Naive thymus-derived CD4-positive, alpha-beta T cell (primary cell): ENCODE measurements at regions of chr9 and their contacts with region 1.

Region 1: DNA sequence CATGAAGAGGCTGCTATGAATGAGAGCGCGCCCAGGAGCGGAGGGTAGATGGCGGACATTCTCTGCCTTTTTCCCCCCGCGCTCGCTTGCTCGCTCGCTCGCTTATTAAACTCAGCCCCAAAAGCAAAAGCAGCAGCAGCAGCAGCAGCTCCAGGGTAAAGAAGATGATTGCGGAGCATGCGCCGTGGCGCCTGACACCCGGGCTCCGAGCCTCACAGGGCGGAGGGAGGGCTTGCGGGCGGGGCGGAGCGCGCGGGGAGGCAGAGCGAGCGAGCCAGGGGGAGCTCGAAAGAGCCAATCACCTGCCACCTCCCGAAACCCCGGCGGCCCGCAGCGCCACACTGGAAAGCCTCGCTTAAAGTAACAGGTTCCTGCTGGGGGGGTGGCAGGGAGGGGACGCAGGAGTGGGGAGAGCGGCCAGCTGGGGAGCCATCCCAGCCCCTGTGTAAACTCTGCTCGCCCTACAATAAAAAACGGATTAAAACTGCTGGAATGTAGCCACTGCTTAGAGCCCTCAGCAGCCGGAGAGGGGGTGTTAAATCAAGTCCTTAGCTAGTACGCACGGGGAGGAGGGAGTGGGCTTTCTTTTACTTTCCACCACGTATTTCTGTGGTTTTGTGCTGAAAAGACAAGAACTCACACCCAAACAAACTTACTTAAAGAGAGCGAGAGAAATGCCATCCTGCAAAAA is at the start of gene MLLT3:
- DNase-seq: peak; percentile 91 to 98 (median 98)
- ATAC-seq: peak; percentile 88
- H3K4me3 ChIP-seq: peak within 1 kb of the TSS; percentile 84
- H3K4me3 Mint-ChIP-seq: peak within 1 kb of the TSS; percentile 92 to 100 (median 98)
- H3K27ac ChIP-seq: peak within 1 kb of the TSS; percentile 89
- H3K27ac Mint-ChIP-seq: peak within 1 kb of the TSS; percentile 89 to 100 (median 99)
- H3K4me1 ChIP-seq: peaks cover 21 to 40% of the 10 kb centered on the region in 2 donors
- H3K4me1 Mint-ChIP-seq: peaks cover 30 to 48% (median 45%) of the 10 kb centered on the region in 7 donors
- H3K27me3 ChIP-seq: no peaks in the 10 kb centered on the region
- H3K27me3 Mint-ChIP-seq: no peaks in the 10 kb centered on the region
- total RNA-seq, gene MLLT3: 40.9 to 85.3 (median 71.3) TPM

Region 2: DNA sequence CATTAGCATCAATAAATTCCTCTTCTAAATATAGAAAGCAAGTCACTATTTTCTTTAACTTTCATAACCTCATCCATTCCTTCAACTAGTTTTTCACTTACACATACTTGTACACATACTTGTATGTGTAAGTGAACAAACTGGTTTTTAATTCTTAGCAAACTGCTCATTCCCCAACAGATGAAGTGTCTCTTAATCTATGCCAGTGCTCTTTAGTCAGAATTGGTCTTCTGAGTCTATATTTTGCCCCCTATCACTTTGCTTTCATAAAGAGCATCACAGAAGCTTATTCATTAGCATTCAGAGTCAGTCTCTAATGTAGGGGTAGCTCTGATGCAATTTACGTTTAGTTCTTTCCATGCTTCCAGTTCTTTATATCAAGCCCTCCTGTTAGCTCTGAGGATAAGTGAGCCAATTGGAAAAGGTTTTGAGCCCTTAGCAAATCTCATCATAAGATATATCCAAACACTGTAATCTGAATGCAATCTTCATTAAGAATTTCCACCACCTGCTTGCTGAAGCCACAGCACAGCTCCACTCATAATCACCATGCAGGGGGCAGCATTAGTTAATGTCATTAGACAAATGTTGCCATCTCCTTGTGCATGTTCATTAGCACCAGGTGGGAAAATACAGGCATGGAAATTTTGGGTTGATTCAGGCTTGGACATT is 655.1 kb before region 1 on chr9:
- CTCF ChIA-PET with region 1: no interaction called
- POLR2A ChIA-PET with region 1: no interaction called
- intact Hi-C with region 1: loop called in 1 of 2 experiments (anchors 5 kb)
- DNase-seq: peak in 2 of 9 donors; percentile 5 to 9
- ATAC-seq: no peak
- H3K4me3 ChIP-seq: no peak overlapping the region
- H3K4me3 Mint-ChIP-seq: no peak overlapping the region
- H3K27ac ChIP-seq: no peak overlapping the region
- H3K27ac Mint-ChIP-seq: no peak overlapping the region
- H3K4me1 ChIP-seq: no peaks in the 10 kb centered on the region
- H3K4me1 Mint-ChIP-seq: peaks cover 0 to 14% (median 6%) of the 10 kb centered on the region in 7 donors
- H3K27me3 ChIP-seq: no peaks in the 10 kb centered on the region
- H3K27me3 Mint-ChIP-seq: no peaks in the 10 kb centered on the region

Region 3: GRCh38 chr9:20242510-20243189 is 379.8 kb before region 1 on chr9:
- CTCF ChIA-PET with region 1: no interaction called
- POLR2A ChIA-PET with region 1: interaction called, 4 read pairs
- intact Hi-C with region 1: loop called (anchors 2 to 5 kb)
- DNase-seq: peak in 8 of 9 donors; percentile 33 to 82 (median 76)
- ATAC-seq: peak; percentile 86
- H3K4me3 ChIP-seq: peak overlapping the region; percentile 42
- H3K4me3 Mint-ChIP-seq: peak overlapping the region; percentile 51 to 89 (median 83)
- H3K27ac ChIP-seq: peak overlapping the region; percentile 1
- H3K27ac Mint-ChIP-seq: peak overlapping the region; percentile 39 to 90 (median 74)
- H3K4me1 ChIP-seq: peaks cover 18 to 32% of the 10 kb centered on the region in 2 donors
- H3K4me1 Mint-ChIP-seq: peaks cover 38 to 84% (median 72%) of the 10 kb centered on the region in 7 donors
- H3K27me3 ChIP-seq: no peaks in the 10 kb centered on the region
- H3K27me3 Mint-ChIP-seq: no peaks in the 10 kb centered on the region

Region 4: GRCh38 chr9:20426019-20426418 is 196.5 kb before region 1 on chr9:
- CTCF ChIA-PET with region 1: no interaction called
- POLR2A ChIA-PET with region 1: interaction called, 4 read pairs
- intact Hi-C with region 1: loop called (anchors 5 kb)
- DNase-seq: no peak
- ATAC-seq: no peak
- H3K4me3 ChIP-seq: no peak overlapping the region
- H3K4me3 Mint-ChIP-seq: no peak overlapping the region
- H3K27ac ChIP-seq: no peak overlapping the region
- H3K27ac Mint-ChIP-seq: peak overlapping the region in 1 of 9 donors; percentile 21
- H3K4me1 ChIP-seq: peaks cover 3 to 4% of the 10 kb centered on the region in 2 donors
- H3K4me1 Mint-ChIP-seq: peaks cover 17 to 75% (median 62%) of the 10 kb centered on the region in 7 donors
- H3K27me3 ChIP-seq: no peaks in the 10 kb centered on the region
- H3K27me3 Mint-ChIP-seq: no peaks in the 10 kb centered on the region

Region 5: GRCh38 chr9:20658677-20659473 is 36.4 kb after region 1 on chr9:
- CTCF ChIA-PET with region 1: interaction called, 3 read pairs
- POLR2A ChIA-PET with region 1: interaction called, 7 read pairs
- intact Hi-C with region 1: loop called (anchors 1 kb)
- DNase-seq: no peak
- ATAC-seq: peak; percentile 20
- H3K4me3 ChIP-seq: peak overlapping the region; percentile 27
- H3K4me3 Mint-ChIP-seq: peak overlapping the region in 1 of 10 donors; percentile 85
- H3K27ac ChIP-seq: no peak overlapping the region
- H3K27ac Mint-ChIP-seq: peak overlapping the region in 8 of 9 donors; percentile 69 to 94 (median 84)
- H3K4me1 ChIP-seq: peaks cover 0 to 5% of the 10 kb centered on the region in 2 donors
- H3K4me1 Mint-ChIP-seq: peaks cover 0 to 24% (median 14%) of the 10 kb centered on the region in 7 donors
- H3K27me3 ChIP-seq: no peaks in the 10 kb centered on the region
- H3K27me3 Mint-ChIP-seq: peaks cover 0 to 2% (median 0%) of the 10 kb centered on the region in 5 donors

Region 6: GRCh38 chr9:20744036-20744630 is 121.7 kb after region 1 on chr9:
- CTCF ChIA-PET with region 1: no interaction called
- POLR2A ChIA-PET with region 1: no interaction called
- intact Hi-C with region 1: no loop called
- DNase-seq: no peak
- ATAC-seq: no peak
- H3K4me3 ChIP-seq: no peak overlapping the region
- H3K4me3 Mint-ChIP-seq: no peak overlapping the region
- H3K27ac ChIP-seq: no peak overlapping the region
- H3K27ac Mint-ChIP-seq: peak overlapping the region in 1 of 9 donors; percentile 6
- H3K4me1 ChIP-seq: peaks cover 0 to 8% of the 10 kb centered on the region in 2 donors
- H3K4me1 Mint-ChIP-seq: peaks cover 11 to 23% (median 18%) of the 10 kb centered on the region in 7 donors
- H3K27me3 ChIP-seq: no peaks in the 10 kb centered on the region
- H3K27me3 Mint-ChIP-seq: no peaks in the 10 kb centered on the region

Region 7: DNA sequence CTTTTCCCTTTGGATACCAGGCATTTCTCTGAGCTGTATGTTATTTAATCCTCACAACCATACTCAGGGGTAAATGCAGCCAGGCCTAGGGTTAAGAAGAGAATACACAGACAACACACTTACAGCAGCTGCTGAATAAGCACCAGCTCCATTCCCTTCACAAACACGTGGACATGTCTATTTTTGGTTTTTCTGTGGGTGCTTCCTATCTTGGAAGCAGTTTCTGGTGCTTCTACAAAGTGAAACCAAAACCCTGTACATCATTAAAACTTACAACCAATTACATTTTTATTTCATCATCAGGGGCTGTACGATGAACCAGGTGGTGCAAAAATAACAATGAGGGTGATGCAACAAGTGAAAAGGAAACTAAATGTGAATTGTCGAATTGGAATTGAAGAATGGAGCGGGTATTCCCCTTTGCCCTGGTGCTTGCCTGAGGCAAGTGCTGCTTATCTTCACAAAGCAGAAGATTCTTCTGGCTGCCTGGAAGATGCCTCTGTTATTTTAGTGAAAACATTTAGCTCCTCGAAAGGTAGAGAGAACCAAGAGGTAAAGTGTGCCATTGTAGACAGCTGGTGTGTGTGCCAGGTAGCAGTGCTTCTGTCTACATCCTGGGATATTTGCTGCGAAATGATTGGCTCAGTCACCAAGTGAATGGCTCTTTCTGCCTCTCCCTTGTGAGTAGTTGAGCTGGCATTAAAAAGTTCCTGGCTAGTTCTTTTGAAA is 473.9 kb after region 1 on chr9:
- CTCF ChIA-PET with region 1: no interaction called
- POLR2A ChIA-PET with region 1: no interaction called
- intact Hi-C with region 1: loop called in 1 of 2 experiments (anchors 5 kb)
- DNase-seq: peak in 7 of 9 donors; percentile 31 to 75 (median 68)
- ATAC-seq: peak; percentile 97
- H3K4me3 ChIP-seq: peak overlapping the region; percentile 49
- H3K4me3 Mint-ChIP-seq: peak overlapping the region; percentile 66 to 82 (median 72)
- H3K27ac ChIP-seq: peak overlapping the region; percentile 8
- H3K27ac Mint-ChIP-seq: peak overlapping the region; percentile 46 to 92 (median 83)
- H3K4me1 ChIP-seq: peaks cover 15 to 17% of the 10 kb centered on the region in 2 donors
- H3K4me1 Mint-ChIP-seq: peaks cover 25 to 44% (median 39%) of the 10 kb centered on the region in 7 donors
- H3K27me3 ChIP-seq: no peaks in the 10 kb centered on the region
- H3K27me3 Mint-ChIP-seq: no peaks in the 10 kb centered on the region